OCI-LY7 (cell line): ENCODE measurements at regions of chr7 and their contacts with region 1.

Region 1: GRCh38 chr7:2393706-2394105 is 9.7 kb upstream of the CHST12 start:
- DNase-seq: no peak
- H3K4me3 ChIP-seq: no peak overlapping the region
- H3K27ac ChIP-seq: no peak overlapping the region
- H3K4me1 ChIP-seq: no peaks in the 10 kb centered on the region
- CTCF ChIP-seq: no peak

Region 2: GRCh38 chr7:2465928-2466327 is 72.2 kb after region 1 on chr7:
- CTCF ChIA-PET with region 1: no interaction called
- POLR2A ChIA-PET with region 1: no interaction called
- intact Hi-C with region 1: loop called (anchors 5 kb)
- DNase-seq: no peak
- H3K4me3 ChIP-seq: no peak overlapping the region
- H3K27ac ChIP-seq: no peak overlapping the region
- H3K4me1 ChIP-seq: no peaks in the 10 kb centered on the region
- CTCF ChIP-seq: no peak